Activated T-helper 2 cell treated with anti-CD3 and anti-CD28 coated beads, Interferon-gamma antibody, Interleukin-2, Interleukin-4, amounts not matched to agents 10 μg/mL and 5 μg/mL and 100 μg/mL, durations not matched to agents 14 hours and 24 hours and 36 hours (primary cell): ENCODE measurements at regions of chr7 and their contacts with region 1.

Region 1: GRCh38 chr7:36152756-36153570 is at the start of gene EEPD1:
- DNase-seq: peak; percentile 99
- H3K4me3 Mint-ChIP-seq: peak within 1 kb of the TSS; percentile 70
- H3K27ac Mint-ChIP-seq: peak within 1 kb of the TSS; percentile 36
- H3K4me1 Mint-ChIP-seq: peaks cover 9% of the 10 kb centered on the region
- H3K27me3 Mint-ChIP-seq: peaks cover 27% of the 10 kb centered on the region
- total RNA-seq, gene EEPD1: 0.57 and 0.67 TPM in 2 replicates

Region 2: GRCh38 chr7:36366718-36367560 is 214.0 kb after region 1 on chr7:
- intact Hi-C with region 1: loop called (anchors 2 kb)
- DNase-seq: peak; percentile 87
- H3K4me3 Mint-ChIP-seq: peak overlapping the region; percentile 84
- H3K27ac Mint-ChIP-seq: no peak overlapping the region
- H3K4me1 Mint-ChIP-seq: peaks cover 11% of the 10 kb centered on the region
- H3K27me3 Mint-ChIP-seq: peaks cover 39% of the 10 kb centered on the region

Region 3: GRCh38 chr7:37149773-37150124 is 996.8 kb after region 1 on chr7:
- intact Hi-C with region 1: no loop called
- DNase-seq: no peak
- H3K4me3 Mint-ChIP-seq: no peak overlapping the region
- H3K27ac Mint-ChIP-seq: peak overlapping the region; percentile 28
- H3K4me1 Mint-ChIP-seq: peaks cover 16% of the 10 kb centered on the region
- H3K27me3 Mint-ChIP-seq: no peaks in the 10 kb centered on the region